PC-3 (cell line): ENCODE measurements at regions of chr2 and their contacts with region 1.

Region 1: GRCh38 chr2:149994057-149994753 is 406.6 kb upstream of the MMADHC start:
- DNase-seq: peak; percentile 98
- ATAC-seq: peak; percentile 59
- H3K4me3 ChIP-seq: no peak overlapping the region
- H3K27ac ChIP-seq: peak overlapping the region; percentile 45
- H3K4me1 ChIP-seq: peaks cover 56% of the 10 kb centered on the region
- H3K27me3 ChIP-seq: no peaks in the 10 kb centered on the region
- CTCF ChIP-seq: no peak

Region 2: GRCh38 chr2:148102641-148103040 is 1891.6 kb before region 1 on chr2:
- CTCF ChIA-PET with region 1: no interaction called
- POLR2A ChIA-PET with region 1: no interaction called
- intact Hi-C with region 1: no loop called
- DNase-seq: no peak
- ATAC-seq: no peak
- H3K4me3 ChIP-seq: no peak overlapping the region
- H3K27ac ChIP-seq: no peak overlapping the region
- H3K4me1 ChIP-seq: no peaks in the 10 kb centered on the region
- H3K27me3 ChIP-seq: no peaks in the 10 kb centered on the region
- CTCF ChIP-seq: no peak

Region 3: DNA sequence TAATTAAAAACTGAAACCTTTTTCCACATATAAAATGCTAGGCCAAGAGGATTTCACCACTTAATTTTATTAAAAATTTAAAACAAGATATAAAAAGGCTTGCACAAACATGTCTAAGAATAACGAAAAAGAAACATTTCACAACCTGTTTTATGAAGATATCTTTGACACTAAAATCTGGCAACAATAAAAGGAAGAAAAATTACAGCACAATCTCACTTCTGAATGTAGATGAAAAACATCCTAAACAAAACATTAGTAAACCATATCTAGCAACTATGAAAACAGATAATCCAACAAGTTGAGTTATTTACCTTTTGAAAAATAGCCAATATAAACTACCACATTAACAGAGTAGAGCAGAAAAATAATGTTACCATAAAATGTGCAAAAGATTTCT is 221.2 kb before region 1 on chr2:
- CTCF ChIA-PET with region 1: no interaction called
- POLR2A ChIA-PET with region 1: interaction called, 3 read pairs
- intact Hi-C with region 1: loop called (anchors 10 kb)
- DNase-seq: no peak
- ATAC-seq: no peak
- H3K4me3 ChIP-seq: no peak overlapping the region
- H3K27ac ChIP-seq: no peak overlapping the region
- H3K4me1 ChIP-seq: peaks cover 40% of the 10 kb centered on the region
- H3K27me3 ChIP-seq: no peaks in the 10 kb centered on the region
- CTCF ChIP-seq: no peak

Region 4: GRCh38 chr2:149877913-149878312 is 116.3 kb before region 1 on chr2:
- CTCF ChIA-PET with region 1: no interaction called
- POLR2A ChIA-PET with region 1: no interaction called
- intact Hi-C with region 1: no loop called
- DNase-seq: peak; percentile 93
- ATAC-seq: peak; percentile 90
- H3K4me3 ChIP-seq: no peak overlapping the region
- H3K27ac ChIP-seq: peak overlapping the region; percentile 50
- H3K4me1 ChIP-seq: peaks cover 17% of the 10 kb centered on the region
- H3K27me3 ChIP-seq: no peaks in the 10 kb centered on the region
- CTCF ChIP-seq: no peak

Region 5: GRCh38 chr2:149924028-149924427 is 70.2 kb before region 1 on chr2:
- CTCF ChIA-PET with region 1: no interaction called
- POLR2A ChIA-PET with region 1: no interaction called
- intact Hi-C with region 1: loop called (anchors 5 kb)
- DNase-seq: peak; percentile 61
- ATAC-seq: no peak
- H3K4me3 ChIP-seq: no peak overlapping the region
- H3K27ac ChIP-seq: peak overlapping the region; percentile 82
- H3K4me1 ChIP-seq: peaks cover 31% of the 10 kb centered on the region
- H3K27me3 ChIP-seq: no peaks in the 10 kb centered on the region
- CTCF ChIP-seq: no peak

Region 6: DNA sequence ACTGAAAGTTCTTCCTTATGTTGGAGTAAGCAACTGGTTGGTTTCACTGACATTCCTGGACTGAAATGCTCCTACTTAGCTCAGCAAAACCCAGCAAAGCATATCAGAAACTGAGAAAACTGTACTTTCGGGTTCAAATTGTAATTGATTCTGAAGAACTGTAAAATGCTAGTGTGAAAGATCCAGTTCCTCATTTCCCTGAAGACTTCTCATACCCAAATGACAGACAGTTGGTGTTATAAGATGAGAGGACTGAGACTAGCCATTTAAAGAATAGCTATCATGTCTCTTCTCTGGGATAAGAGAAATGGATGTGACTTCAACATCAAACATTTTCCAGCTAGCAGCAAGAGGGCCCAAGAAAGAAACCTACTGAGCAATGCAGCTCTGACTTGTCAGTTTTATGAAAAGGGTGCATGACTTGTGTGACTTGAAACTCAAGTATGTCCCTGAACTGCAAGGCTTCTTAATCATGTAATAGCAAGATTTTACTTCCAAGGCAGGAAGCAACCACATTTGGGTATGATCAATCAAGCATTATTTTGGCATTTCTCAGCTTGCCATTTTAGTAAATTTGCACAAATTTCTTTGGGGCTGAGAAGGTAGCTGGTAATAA is 13.7 kb after region 1 on chr2:
- CTCF ChIA-PET with region 1: no interaction called
- POLR2A ChIA-PET with region 1: no interaction called
- intact Hi-C with region 1: no loop called
- DNase-seq: no peak
- ATAC-seq: no peak
- H3K4me3 ChIP-seq: no peak overlapping the region
- H3K27ac ChIP-seq: no peak overlapping the region
- H3K4me1 ChIP-seq: no peaks in the 10 kb centered on the region
- H3K27me3 ChIP-seq: no peaks in the 10 kb centered on the region
- CTCF ChIP-seq: no peak

Region 7: GRCh38 chr2:150143087-150143536 is 148.9 kb after region 1 on chr2:
- CTCF ChIA-PET with region 1: no interaction called
- POLR2A ChIA-PET with region 1: no interaction called
- intact Hi-C with region 1: loop called (anchors 2 kb)
- DNase-seq: peak; percentile 94
- ATAC-seq: peak; percentile 29
- H3K4me3 ChIP-seq: peak overlapping the region; percentile 21; the same call in 1 of the 2 replicates
- H3K27ac ChIP-seq: peak overlapping the region; percentile 98
- H3K4me1 ChIP-seq: peaks cover 62% of the 10 kb centered on the region
- H3K27me3 ChIP-seq: no peaks in the 10 kb centered on the region
- CTCF ChIP-seq: no peak

Region 8: GRCh38 chr2:150174971-150175421 is 180.8 kb after region 1 on chr2:
- CTCF ChIA-PET with region 1: no interaction called
- POLR2A ChIA-PET with region 1: no interaction called
- intact Hi-C with region 1: loop called (anchors 1 kb)
- DNase-seq: no peak
- ATAC-seq: peak; percentile 16
- H3K4me3 ChIP-seq: no peak overlapping the region
- H3K27ac ChIP-seq: peak overlapping the region; percentile 66
- H3K4me1 ChIP-seq: peaks cover 27% of the 10 kb centered on the region
- H3K27me3 ChIP-seq: no peaks in the 10 kb centered on the region
- CTCF ChIP-seq: no peak